ENCODE measurements at regions of chr6 and their contacts with region 1.

Region 1: DNA sequence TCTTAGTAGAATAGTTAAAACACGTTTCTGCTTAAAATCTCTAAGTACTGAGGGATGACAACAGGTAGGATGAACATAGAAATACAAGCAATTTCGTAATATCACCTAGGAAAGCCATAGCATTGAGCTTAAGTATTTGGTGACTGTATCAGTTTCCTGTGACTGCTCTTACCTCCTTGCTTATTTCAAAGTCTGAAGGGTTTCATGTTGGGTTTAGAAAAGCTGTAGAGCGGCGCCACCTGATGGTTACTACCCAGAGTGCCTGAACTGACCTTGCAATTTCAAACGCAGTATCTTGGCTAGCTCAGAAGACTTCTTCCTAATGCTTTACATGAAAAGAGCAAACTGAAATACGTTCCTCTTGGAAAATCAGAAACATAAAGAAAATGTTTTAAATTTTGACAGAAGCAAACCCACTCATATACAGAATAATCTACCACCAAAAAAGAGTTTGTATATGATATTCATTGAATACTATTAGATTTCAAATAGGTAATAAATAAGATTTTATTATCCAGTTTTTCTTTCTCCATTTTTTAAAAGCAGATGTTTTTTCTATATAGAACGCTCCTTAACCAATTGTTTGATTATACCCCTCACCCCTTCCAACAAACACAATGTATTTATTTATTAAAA is 82.3 kb upstream of the RIPOR2 start:
- DNase-seq: peak; percentile 90
- H3K4me3 Mint-ChIP-seq: peak overlapping the region; percentile 42
- H3K27ac Mint-ChIP-seq: peak overlapping the region; percentile 86
- H3K4me1 Mint-ChIP-seq: peaks cover 69% of the 10 kb centered on the region
- H3K27me3 Mint-ChIP-seq: no peaks in the 10 kb centered on the region

Region 2: DNA sequence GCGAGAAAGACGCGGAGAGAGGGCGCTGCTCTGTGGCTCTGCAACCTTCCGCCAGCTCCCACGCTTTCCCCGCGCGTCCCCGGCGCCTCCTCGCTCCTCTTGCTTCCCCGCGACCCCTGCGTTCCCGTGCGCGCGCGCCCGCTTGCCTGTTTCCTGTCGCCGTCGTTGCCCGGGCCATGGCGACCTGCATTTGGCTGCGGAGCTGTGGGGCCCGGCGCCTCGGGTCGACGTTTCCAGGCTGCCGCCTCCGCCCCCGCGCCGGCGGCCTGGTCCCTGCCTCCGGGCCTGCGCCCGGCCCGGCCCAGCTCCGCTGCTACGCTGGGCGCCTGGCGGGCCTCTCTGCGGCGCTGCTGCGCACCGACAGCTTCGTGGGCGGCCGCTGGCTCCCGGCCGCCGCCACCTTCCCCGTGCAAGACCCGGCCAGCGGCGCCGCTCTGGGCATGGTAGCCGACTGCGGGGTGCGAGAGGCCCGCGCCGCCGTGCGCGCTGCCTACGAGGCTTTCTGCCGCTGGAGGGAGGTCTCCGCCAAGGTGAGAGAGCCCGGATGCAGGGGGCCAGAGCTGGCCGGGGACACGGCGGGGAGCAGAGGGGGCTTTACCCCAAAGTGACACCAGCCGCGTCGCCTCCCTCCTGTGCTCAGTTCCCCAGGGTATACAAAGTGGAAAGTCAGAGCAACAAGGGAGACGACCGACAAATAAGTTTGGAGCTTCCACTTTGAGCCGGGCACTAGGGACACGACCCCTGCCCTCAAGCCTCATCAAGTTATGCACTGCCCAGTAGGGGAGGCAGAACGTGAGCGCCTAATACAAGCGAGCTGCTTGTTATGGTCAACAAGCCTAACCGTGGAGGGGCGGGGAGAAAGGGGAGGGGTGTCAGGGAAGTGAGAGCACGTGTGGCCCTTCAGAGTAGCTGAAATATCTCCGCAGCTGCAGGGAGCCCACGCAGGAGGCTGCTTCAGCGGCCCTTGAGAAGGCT is 522.9 kb before region 1 on chr6 and contains the start of gene ALDH5A1:
- CTCF ChIA-PET with region 1: no interaction called
- POLR2A ChIA-PET with region 1: no interaction called
- intact Hi-C with region 1: loop called (anchors 10 kb)
- DNase-seq: peak; percentile 89
- H3K4me3 Mint-ChIP-seq: peak within 1 kb of the TSS; percentile 78
- H3K27ac Mint-ChIP-seq: peak within 1 kb of the TSS; percentile 44
- H3K4me1 Mint-ChIP-seq: peaks cover 13% of the 10 kb centered on the region
- H3K27me3 Mint-ChIP-seq: no peaks in the 10 kb centered on the region
- total RNA-seq, gene ALDH5A1: 13.1 to 13.9 TPM

Region 3: GRCh38 chr6:24720604-24721460 is 297.2 kb before region 1 on chr6:
- CTCF ChIA-PET with region 1: interaction called, 8 read pairs
- POLR2A ChIA-PET with region 1: no interaction called
- intact Hi-C with region 1: loop called (anchors 5 kb)
- DNase-seq: peak; percentile 100
- H3K4me3 Mint-ChIP-seq: peak overlapping the region; percentile 100
- H3K27ac Mint-ChIP-seq: peak overlapping the region; percentile 99
- H3K4me1 Mint-ChIP-seq: peaks cover 32% of the 10 kb centered on the region
- H3K27me3 Mint-ChIP-seq: peaks cover 1% of the 10 kb centered on the region

Region 4: DNA sequence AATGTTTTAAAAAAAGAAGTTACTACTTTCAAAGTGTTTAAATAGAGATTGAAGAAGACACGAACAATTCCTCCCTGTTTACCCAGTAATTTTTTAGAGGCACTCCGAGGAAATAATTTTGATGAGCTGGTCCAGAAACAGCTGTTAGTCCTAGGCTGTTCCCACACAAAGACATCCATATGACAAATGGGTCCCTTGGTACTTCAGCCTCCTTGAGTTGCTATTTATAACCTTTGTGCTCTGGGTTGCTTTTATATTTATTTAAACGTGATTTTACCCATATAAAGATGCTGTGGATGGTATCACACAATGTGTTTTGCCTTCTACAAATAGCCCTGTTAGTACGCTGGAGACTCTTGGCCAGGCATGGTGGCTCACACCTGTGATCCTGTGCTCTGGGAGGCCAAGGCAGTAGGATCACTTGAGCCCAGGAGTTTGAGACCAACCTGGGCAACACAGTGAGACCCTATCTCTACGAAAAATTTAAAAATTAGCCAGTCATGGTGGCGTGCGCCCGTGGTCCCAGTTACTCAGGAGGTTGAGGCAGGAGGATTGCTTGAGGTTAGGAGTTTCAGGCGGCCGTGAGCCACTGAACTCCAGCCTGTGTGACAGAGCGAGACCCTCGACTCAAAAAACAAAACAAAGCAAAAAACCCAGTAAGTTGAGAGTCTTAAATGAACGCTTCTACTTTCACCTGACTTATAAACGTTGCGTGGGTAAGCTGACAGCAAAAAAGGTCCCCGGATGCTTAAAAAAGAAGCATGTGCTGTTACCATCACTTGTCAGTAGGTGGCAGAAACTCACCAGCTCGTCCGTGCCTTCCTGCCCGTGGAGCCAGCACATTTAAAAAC is 162.4 kb before region 1 on chr6:
- CTCF ChIA-PET with region 1: interaction called, 153 read pairs
- POLR2A ChIA-PET with region 1: interaction called, 8 read pairs
- intact Hi-C with region 1: loop called (anchors 1 kb)
- DNase-seq: peak; percentile 81
- H3K4me3 Mint-ChIP-seq: peak overlapping the region; percentile 17
- H3K27ac Mint-ChIP-seq: peak overlapping the region; percentile 89
- H3K4me1 Mint-ChIP-seq: peaks cover 56% of the 10 kb centered on the region
- H3K27me3 Mint-ChIP-seq: no peaks in the 10 kb centered on the region

Region 5: DNA sequence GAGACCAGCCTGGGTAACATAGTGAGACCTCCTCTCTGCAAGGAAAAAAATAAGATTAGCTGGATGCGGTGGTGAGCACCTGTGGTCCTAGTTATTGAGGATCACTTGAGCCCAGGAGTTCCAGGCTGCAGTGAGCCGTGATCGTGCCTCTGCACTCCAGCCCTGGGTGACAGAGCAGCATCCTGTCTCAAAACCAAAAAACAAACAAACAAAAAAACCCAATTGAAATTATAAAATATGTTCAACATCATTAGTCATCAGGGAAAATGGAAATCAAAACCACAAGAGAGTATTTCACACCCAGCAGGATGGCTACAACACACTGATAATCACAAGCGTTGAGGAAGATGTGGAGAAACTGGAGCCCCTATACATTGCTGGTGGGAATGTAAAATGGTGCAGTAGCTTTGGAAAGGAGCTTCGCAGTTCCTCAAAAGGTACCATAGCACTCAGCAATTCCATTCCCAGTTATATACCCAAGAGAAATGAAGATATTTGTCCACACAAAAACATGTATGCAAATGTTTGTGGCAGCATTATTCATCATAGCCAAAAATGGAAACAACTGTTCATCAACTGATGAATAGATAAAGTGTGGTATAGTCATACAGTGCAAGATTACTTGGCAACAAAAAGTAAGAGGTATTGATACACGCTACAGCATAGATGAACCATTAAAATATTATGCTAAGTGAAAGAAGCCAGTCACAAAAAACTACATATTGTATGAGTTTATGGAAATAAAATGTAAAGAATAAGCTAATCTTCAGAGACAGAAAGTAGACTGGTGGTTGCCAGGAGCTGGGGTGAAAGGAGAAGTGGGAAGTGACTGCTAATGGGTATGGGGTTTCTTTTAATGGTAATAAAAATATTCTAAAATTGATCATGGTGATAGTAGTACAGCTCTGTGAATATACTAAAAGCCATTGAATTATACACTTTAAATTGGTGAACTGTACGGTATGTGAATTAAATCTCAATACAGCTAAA is 43.6 kb before region 1 on chr6:
- CTCF ChIA-PET with region 1: interaction called, 7 read pairs
- POLR2A ChIA-PET with region 1: no interaction called
- intact Hi-C with region 1: loop called (anchors 2 kb)
- DNase-seq: peak; percentile 69
- H3K4me3 Mint-ChIP-seq: peak overlapping the region; percentile 48
- H3K27ac Mint-ChIP-seq: peak overlapping the region; percentile 90
- H3K4me1 Mint-ChIP-seq: peaks cover 64% of the 10 kb centered on the region
- H3K27me3 Mint-ChIP-seq: no peaks in the 10 kb centered on the region

Region 6: DNA sequence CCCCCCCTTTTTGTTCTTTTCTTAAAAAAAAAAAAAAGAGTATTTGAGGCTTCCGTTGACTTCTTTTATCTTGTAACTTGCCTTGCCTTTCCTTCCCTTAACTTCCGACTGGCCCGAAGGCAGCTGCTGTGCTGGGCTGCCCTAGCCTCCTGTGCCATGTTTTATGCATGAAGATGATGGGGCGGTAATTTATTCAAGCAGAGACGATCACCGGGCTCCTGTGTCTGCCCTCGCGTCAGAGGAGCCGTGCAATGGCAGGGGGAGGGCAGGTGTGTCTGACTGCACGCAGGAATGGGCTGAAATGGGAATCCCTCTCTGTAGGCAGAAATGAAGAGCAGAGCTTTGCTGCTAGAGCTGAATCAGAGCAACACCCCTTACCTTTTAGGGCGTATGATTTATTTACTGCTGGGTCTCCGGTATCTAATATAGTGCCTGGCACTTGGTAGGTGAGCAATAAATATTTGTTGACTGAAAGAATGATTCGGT is 24.0 kb after region 1 on chr6:
- CTCF ChIA-PET with region 1: interaction called, 110 read pairs
- POLR2A ChIA-PET with region 1: no interaction called
- intact Hi-C with region 1: no loop called
- DNase-seq: peak; percentile 69
- H3K4me3 Mint-ChIP-seq: peak overlapping the region; percentile 91
- H3K27ac Mint-ChIP-seq: peak overlapping the region; percentile 97
- H3K4me1 Mint-ChIP-seq: peaks cover 60% of the 10 kb centered on the region
- H3K27me3 Mint-ChIP-seq: no peaks in the 10 kb centered on the region